ENCODE measurements at regions of chr2 and their contacts with region 1.

Region 1: GRCh38 chr2:105744091-105744908 is 412 bp upstream of the NCK2 start:
- DNase-seq: peak; percentile 68
- H3K4me3 Mint-ChIP-seq: peak overlapping the region; percentile 77
- H3K27ac Mint-ChIP-seq: peak overlapping the region; percentile 83
- H3K4me1 Mint-ChIP-seq: peaks cover 74% of the 10 kb centered on the region
- H3K27me3 Mint-ChIP-seq: no peaks in the 10 kb centered on the region

Region 2: DNA sequence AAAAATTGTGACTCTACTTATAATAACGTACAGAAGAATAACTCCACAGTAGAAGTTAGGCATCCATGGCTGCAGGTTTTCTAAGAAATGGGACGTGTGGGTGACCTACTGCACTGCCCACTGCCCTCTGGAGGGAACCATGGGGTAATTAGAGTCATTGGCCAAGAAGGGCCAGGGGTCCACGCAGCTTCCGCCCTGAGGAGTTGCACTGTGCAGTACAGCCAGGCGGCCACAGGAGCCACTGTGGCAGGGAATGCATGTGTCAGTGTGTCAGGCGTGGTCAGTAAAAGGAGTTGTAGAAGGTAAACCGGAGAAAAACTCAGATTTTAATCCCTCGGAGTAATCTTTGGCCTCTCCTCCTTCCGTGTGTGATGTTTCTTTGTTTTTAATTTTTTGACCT is 25.2 kb after region 1 on chr2:
- CTCF ChIA-PET with region 1: interaction called, 4 read pairs
- POLR2A ChIA-PET with region 1: interaction called, 120 read pairs
- DNase-seq: no peak
- H3K4me3 Mint-ChIP-seq: no peak overlapping the region
- H3K27ac Mint-ChIP-seq: peak overlapping the region; percentile 76
- H3K4me1 Mint-ChIP-seq: peaks cover 95% of the 10 kb centered on the region
- H3K27me3 Mint-ChIP-seq: no peaks in the 10 kb centered on the region

Region 3: GRCh38 chr2:105775809-105776559 is 31.7 kb after region 1 on chr2:
- CTCF ChIA-PET with region 1: interaction called, 7 read pairs
- POLR2A ChIA-PET with region 1: interaction called, 49 read pairs
- DNase-seq: peak; percentile 50
- H3K4me3 Mint-ChIP-seq: peak overlapping the region; percentile 69
- H3K27ac Mint-ChIP-seq: peak overlapping the region; percentile 92
- H3K4me1 Mint-ChIP-seq: peaks cover 92% of the 10 kb centered on the region
- H3K27me3 Mint-ChIP-seq: no peaks in the 10 kb centered on the region

Region 4: GRCh38 chr2:105782123-105782522 is 37.8 kb after region 1 on chr2:
- CTCF ChIA-PET with region 1: interaction called, 46 read pairs
- POLR2A ChIA-PET with region 1: interaction called, 97 read pairs
- DNase-seq: no peak
- H3K4me3 Mint-ChIP-seq: no peak overlapping the region
- H3K27ac Mint-ChIP-seq: peak overlapping the region; percentile 58
- H3K4me1 Mint-ChIP-seq: peaks cover 92% of the 10 kb centered on the region
- H3K27me3 Mint-ChIP-seq: no peaks in the 10 kb centered on the region

Region 5: DNA sequence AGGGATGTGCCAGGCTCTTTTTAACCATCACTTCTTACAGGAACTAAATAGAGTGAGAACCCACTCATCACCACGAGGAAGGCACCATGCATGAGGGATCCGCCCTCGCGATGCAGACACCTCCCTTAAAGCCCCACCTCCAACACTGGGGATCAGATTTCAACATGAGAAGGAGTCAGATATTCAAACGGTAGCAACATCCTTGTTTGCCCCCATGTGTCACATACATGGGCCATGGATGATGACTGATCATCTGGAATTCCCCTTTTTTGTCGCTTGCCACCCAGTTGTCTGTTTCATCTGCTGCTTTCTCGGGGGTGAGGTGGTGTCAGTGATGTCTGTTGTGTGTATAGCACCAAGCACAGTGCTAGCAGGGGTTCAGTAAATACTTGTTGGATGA is 58.3 kb after region 1 on chr2:
- CTCF ChIA-PET with region 1: no interaction called
- POLR2A ChIA-PET with region 1: interaction called, 106 read pairs
- DNase-seq: peak; percentile 60
- H3K4me3 Mint-ChIP-seq: peak overlapping the region; percentile 23
- H3K27ac Mint-ChIP-seq: peak overlapping the region; percentile 98
- H3K4me1 Mint-ChIP-seq: peaks cover 91% of the 10 kb centered on the region
- H3K27me3 Mint-ChIP-seq: no peaks in the 10 kb centered on the region

Region 6: DNA sequence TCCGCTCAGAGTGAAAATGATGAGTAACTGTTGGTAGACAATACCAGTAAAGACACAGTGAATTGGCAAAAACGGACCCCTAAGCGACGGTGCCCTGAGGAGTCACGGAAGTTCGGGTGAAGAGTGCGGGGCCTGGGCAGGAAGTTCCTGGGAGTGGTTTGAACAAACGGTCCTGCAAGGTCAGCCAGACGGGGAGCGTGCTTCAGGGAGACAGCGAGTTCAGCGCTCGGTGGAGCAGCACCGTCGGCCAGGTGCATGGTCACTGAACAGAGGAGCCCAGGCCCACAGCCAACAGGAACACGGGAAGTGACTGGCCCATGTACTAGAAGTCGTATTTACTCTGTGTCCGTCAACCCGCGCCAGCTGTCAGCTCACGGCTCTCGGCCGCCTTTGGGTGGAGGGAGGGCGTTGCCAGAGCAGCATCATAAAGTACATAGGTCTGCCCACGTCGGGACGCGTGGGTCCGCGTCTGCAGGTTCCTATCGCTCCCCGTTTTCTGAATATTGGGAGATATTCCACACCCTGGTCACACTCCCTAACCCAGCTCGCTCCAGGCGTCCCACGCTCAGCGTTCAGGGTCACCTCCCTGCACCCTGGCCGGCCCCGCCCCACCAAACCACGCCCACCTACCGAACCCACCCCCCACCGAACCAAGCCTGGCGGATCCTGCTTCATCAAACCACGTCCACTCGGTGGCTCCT is 525.4 kb after region 1 on chr2:
- CTCF ChIA-PET with region 1: no interaction called
- POLR2A ChIA-PET with region 1: no interaction called
- DNase-seq: peak; percentile 58
- H3K4me3 Mint-ChIP-seq: peak overlapping the region; percentile 88
- H3K27ac Mint-ChIP-seq: no peak overlapping the region
- H3K4me1 Mint-ChIP-seq: peaks cover 15% of the 10 kb centered on the region
- H3K27me3 Mint-ChIP-seq: peaks cover 11% of the 10 kb centered on the region

Measured in activated CD4-positive, alpha-beta memory T cell treated with anti-CD3 and anti-CD28 coated beads, Interleukin-2, amount 10 ng/mL, durations not matched to agents 7 days and 5 days (primary cell).